Cardiac septum (tissue), 1 donor: ENCODE measurements at regions of chr12 and their contacts with region 1.

Region 1: GRCh38 chr12:51217968-51218606 is at the start of gene POU6F1:
- DNase-seq: peak; percentile 81
- total RNA-seq, gene POU6F1: 9.1 TPM

Region 2: GRCh38 chr12:51083126-51083833 is 134.8 kb before region 1 on chr12 and contains the start of gene CSRNP2:
- intact Hi-C with region 1: loop called (anchors 10 kb)
- DNase-seq: peak; percentile 99
- total RNA-seq, gene CSRNP2: 30.1 TPM

Region 3: DNA sequence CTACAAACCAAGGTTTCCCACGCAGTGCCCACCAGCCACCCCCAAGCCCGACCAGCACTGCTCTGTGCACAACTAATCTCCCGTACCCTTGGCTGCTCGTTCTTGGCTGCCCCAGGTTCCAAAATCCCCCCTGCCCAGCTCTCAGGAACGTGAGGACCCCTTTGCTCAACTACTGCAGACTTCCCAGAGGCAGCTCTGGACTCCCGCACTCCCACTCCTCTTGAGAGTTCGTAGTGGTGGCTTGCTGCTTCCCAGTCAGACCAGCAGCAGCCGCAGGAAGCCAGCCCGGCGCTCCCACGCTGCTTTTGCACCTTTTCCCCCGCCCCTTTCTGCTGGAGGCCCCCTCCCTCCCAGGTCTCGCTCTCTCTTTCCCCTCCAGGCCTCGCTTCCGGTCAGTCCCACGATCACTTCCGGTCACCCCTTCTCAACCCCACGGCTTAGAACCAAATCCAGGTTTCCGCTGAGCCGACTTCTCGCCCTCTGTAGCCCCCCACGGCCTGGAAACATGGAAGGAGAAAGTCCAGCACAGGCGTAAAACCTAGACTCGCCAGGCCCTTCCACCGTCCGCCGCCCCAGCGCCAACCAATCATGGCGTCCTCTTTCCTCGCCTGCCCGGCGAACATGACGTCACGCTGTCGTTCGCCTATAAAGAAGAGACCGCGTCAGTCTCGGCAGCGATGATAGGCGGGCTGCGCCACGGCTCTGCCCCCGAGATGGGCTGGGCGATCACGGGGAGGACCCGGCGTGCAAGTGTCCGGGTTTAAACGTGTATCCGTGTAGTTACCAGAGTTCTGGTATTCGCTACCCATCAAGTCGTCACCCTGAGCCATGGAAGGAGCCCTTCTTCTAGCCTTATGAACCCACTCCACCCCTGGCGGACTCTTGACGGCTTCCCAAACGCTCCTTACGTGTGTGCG is 45.3 kb before region 1 on chr12 and contains the start of gene TFCP2:
- intact Hi-C with region 1: loop called (anchors 5 kb)
- DNase-seq: peak; percentile 99
- total RNA-seq, gene TFCP2: 20.2 TPM

Region 4: DNA sequence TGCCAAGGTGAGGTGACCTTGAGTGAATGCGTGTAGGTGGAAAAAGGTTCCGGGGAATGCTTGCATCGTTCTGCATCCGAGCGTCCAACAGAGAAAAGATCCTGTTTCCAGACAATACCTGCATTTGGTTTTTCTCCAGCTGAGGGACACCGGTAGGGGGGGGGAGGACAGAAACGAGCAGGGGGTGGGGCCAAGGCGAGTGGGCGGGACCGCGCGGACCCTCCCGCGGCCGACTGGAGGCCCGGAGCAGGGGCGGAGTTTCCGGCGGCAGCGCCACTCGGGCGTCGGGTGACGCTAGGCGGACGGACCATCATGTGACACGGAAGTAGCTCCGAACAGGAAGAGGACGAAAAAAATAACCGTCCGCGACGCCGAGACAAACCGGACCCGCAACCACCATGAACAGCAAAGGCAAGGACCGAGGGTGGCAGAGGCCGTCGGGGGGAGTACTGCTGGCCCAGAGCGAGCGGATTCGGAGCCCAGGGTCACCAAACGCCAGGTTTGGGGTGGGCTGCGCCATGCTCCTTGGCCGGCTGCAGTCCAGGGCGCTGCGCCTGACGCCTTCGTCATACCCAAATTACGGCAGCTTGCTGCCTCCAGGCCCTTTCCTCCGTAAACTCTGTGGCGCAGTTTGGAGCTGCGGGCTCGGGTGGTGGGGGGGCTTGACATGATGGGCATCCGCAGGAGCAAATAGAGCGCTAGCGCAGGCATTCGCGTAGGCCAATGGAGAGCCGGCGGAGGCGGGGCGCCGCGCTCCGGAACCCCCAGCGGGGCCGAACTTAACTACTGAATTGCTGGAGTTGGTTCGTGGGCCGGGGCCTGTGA is 20.6 kb after region 1 on chr12 and contains the start of gene DAZAP2:
- intact Hi-C with region 1: loop called (anchors 2 kb)
- DNase-seq: peak; percentile 98
- total RNA-seq, gene DAZAP2: 169 TPM